Thyroid gland (tissue), 4 donors: ENCODE measurements at regions of chr12 and their contacts with region 1.

Region 1: GRCh38 chr12:108514973-108515814 is at the start of gene FICD:
- DNase-seq: peak; percentile 100
- H3K4me3 ChIP-seq: peak within 1 kb of the TSS; percentile 42 to 75 (median 71)
- H3K27ac ChIP-seq: peak within 1 kb of the TSS in 2 of 3 donors; percentile 8 to 48
- H3K4me1 ChIP-seq: peaks cover 11 to 13% of the 10 kb centered on the region in 2 donors
- H3K27me3 ChIP-seq: no peaks in the 10 kb centered on the region
- CTCF ChIP-seq: no peak
- POLR2A ChIP-seq: peak in 1 of 2 donors; percentile 62
- total RNA-seq, gene FICD: 7.0 to 16.7 (median 10.5) TPM

Region 2: GRCh38 chr12:107685360-107686248 is 829.6 kb before region 1 on chr12 and contains the start of gene PWP1:
- intact Hi-C with region 1: loop called (anchors 10 kb)
- DNase-seq: peak; percentile 95
- H3K4me3 ChIP-seq: peak within 1 kb of the TSS; percentile 75 to 87 (median 80)
- H3K27ac ChIP-seq: peak within 1 kb of the TSS; percentile 44 to 67 (median 45)
- H3K4me1 ChIP-seq: peaks cover 9 to 11% of the 10 kb centered on the region in 2 donors
- H3K27me3 ChIP-seq: no peaks in the 10 kb centered on the region
- CTCF ChIP-seq: no peak
- POLR2A ChIP-seq: peak in 1 of 2 donors; percentile 78
- total RNA-seq, gene PWP1: 73.4 to 90.3 (median 89.3) TPM

Region 3: DNA sequence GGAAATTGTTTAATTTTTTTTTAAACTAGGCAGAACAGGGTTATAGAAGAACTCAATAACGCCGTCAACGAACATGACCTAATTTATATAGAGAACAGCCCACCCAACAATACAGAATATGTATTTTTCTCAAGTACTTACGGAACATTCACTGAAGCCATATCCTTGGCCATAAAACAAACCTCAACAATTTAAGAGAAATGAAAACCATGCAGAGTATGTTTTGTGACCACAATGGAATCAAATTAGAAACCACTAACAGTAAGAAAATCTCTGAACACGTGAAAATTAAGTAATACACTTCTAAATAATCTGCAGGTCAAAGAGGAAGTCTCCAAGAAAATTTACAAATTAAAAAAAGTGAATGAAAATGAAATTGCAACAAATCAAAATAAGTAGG is 36.3 kb after region 1 on chr12:
- intact Hi-C with region 1: no loop called
- DNase-seq: no peak
- H3K4me3 ChIP-seq: no peak overlapping the region
- H3K27ac ChIP-seq: no peak overlapping the region
- H3K4me1 ChIP-seq: no peaks in the 10 kb centered on the region
- H3K27me3 ChIP-seq: no peaks in the 10 kb centered on the region
- CTCF ChIP-seq: no peak
- POLR2A ChIP-seq: no peak

Region 4: DNA sequence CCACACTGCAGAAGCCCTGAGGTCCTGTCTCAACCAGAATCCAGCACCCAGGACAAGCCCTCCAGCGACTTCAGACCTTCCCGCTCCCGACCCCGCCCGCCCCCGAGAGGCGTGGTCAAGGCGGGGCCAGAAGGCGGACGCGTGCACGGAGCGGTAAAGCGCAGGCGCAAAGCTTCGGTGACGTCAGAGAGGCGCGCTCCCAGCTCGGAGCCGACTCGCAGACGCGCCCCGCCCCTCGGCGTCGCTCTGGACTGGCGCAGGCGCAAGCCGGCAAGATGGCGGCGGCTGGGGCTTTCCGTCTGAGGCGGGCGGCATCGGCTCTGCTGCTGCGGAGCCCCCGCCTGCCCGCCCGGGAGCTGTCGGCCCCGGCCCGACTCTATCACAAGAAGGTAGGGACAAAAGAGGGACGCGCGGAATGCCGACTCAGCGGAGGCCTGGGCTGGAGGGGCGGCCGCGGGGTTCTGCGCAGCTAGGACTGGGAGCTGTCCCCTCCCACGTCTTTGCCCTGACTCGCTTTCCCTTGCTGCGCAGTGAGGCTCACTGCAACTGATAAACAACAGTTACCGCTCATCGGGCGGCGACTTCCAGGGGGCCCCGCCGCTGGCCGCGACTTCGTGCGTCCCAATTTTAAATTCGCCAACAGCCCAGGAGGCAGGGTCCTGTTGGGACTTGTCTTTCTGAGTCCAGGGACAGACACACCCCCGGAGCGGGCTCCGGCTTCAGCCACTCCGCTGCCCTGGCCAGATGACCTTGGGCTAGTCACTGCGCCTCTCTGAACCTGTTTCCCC is 47.3 kb after region 1 on chr12 and contains the start of gene ISCU:
- intact Hi-C with region 1: loop called (anchors 2 kb)
- DNase-seq: peak; percentile 94 to 98
- H3K4me3 ChIP-seq: peak within 1 kb of the TSS; percentile 76 to 93 (median 87)
- H3K27ac ChIP-seq: peak within 1 kb of the TSS; percentile 83 to 94 (median 91)
- H3K4me1 ChIP-seq: peaks cover 27 to 39% of the 10 kb centered on the region in 2 donors
- H3K27me3 ChIP-seq: no peaks in the 10 kb centered on the region
- CTCF ChIP-seq: peak in 1 of 6 experiments; percentile 11
- POLR2A ChIP-seq: peak; percentile 94 to 96
- total RNA-seq, gene ISCU: 229 to 512 (median 248) TPM

Region 5: DNA sequence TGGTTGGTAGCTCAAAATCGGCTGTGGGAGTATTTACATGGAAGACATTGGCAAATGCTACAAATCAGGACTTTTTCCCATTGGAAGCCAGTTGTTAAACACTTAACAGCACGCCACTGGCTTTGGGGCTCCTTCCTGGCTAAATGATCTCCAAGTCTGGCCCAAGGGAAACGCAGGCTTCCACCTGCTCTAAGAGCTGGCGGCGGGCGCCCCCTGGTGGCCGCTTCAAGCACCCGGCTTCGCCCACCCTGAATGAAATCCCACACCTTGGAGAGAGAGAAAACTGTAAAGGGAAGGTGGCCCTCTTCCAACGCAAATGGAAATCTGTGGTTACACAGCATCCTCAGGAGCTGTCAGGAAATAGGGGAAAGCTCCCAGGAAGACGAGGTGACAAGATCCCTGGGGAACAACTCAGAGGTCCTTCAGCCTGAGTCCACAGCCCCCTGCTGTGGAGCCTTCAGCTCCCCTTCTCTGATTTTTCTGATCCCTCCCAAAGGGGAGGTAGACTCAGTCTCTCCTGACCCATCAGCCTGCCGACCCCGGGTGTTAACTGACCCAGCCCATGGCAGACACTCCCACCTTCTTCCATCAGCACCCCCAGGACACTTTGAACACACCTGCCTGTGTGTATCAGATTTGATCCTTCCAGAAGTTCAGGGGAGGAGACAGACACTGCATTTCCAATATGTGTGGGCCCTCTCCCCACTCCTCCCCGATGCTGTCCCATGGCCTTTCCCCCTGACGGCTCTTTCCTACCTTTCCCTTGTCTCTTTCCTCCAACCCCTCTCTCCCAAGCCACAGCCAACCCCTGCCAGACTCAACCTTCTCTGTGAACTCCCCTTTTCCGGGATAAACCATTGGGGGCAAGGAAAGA is 103.1 kb after region 1 on chr12:
- intact Hi-C with region 1: loop called (anchors 5 kb)
- DNase-seq: peak; percentile 80 to 84
- H3K4me3 ChIP-seq: no peak overlapping the region
- H3K27ac ChIP-seq: peak overlapping the region; percentile 67 to 82 (median 74)
- H3K4me1 ChIP-seq: peaks cover 7 to 14% of the 10 kb centered on the region in 2 donors
- H3K27me3 ChIP-seq: no peaks in the 10 kb centered on the region
- CTCF ChIP-seq: peak; percentile 88 to 95 (median 92)
- POLR2A ChIP-seq: no peak